B cell (primary cell): ENCODE measurements at regions of chr9 and their contacts with region 1.

Region 1: GRCh38 chr9:133478851-133479711 is at the start of gene SLC2A6:
- DNase-seq: peak; percentile 87
- ATAC-seq: peak; percentile 92
- H3K4me3 ChIP-seq: peak within 1 kb of the TSS; percentile 22 to 83 (median 79)
- H3K4me3 Mint-ChIP-seq: peak within 1 kb of the TSS; percentile 89
- H3K27ac ChIP-seq: peak within 1 kb of the TSS; percentile 71 to 78
- H3K27ac Mint-ChIP-seq: peak within 1 kb of the TSS; percentile 90
- H3K4me1 ChIP-seq: peaks cover 28 to 53% of the 10 kb centered on the region in 2 donors
- H3K4me1 Mint-ChIP-seq: peaks cover 31% of the 10 kb centered on the region
- H3K27me3 ChIP-seq: no peaks in the 10 kb centered on the region
- H3K27me3 Mint-ChIP-seq: peaks cover 3% of the 10 kb centered on the region
- CTCF ChIP-seq: no peak
- total RNA-seq, gene SLC2A6: 47.0 and 51.8 TPM in 2 replicates

Region 2: GRCh38 chr9:133115448-133116345 is 363.4 kb before region 1 on chr9:
- CTCF ChIA-PET with region 1: no interaction called
- POLR2A ChIA-PET with region 1: no interaction called
- intact Hi-C with region 1: loop called (anchors 10 kb)
- DNase-seq: peak; percentile 66
- ATAC-seq: peak; percentile 56
- H3K4me3 ChIP-seq: no peak overlapping the region
- H3K4me3 Mint-ChIP-seq: peak overlapping the region; percentile 67
- H3K27ac ChIP-seq: peak overlapping the region in 1 of 2 donors; percentile 57
- H3K27ac Mint-ChIP-seq: peak overlapping the region; percentile 85
- H3K4me1 ChIP-seq: peaks cover 55 to 68% of the 10 kb centered on the region in 2 donors
- H3K4me1 Mint-ChIP-seq: peaks cover 68% of the 10 kb centered on the region
- H3K27me3 ChIP-seq: no peaks in the 10 kb centered on the region
- H3K27me3 Mint-ChIP-seq: no peaks in the 10 kb centered on the region
- CTCF ChIP-seq: no peak

Region 3: DNA sequence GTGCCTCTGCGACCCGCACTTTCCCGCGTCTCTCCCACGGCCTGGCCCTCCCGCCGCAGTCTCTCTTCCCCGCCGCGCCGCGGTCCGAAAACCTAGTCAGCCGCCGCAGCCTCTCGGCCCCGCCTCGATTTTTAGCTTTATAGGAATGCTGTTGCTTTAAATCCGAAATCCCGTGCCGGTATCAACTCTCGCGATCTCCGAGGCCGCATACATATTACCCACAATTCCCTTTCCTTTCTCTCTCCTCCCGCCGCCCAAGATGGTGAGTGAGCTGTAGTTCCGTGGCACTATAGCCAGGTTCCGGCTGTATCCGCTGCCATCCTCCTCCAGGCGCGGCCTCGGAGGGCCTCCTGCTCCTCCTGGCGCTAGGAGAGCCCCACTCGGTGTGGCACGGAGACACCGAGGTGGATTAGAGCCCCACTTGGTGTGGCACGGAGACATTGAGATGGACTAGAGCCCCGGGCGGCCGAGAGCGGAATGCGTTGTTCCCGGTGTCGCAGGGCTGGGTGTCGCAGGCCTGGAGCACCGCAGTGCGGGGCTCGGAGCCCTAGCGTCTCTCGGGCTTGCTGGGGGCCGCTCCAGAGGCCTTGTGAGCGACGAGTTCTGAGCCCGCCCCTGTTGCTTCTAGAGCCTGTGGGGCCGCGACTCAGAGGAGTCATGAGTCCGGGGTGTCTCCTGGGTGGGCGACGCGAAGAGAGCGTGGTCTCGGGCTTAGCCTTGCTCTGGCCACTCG is 130.9 kb before region 1 on chr9 and contains the starts of genes MED22 and RPL7A:
- CTCF ChIA-PET with region 1: interaction called, 3 read pairs
- POLR2A ChIA-PET with region 1: no interaction called
- intact Hi-C with region 1: loop called (anchors 5 kb)
- DNase-seq: peak; percentile 97
- ATAC-seq: peak; percentile 83
- H3K4me3 ChIP-seq: peak within 1 kb of the TSS; percentile 86 to 96 (median 92)
- H3K4me3 Mint-ChIP-seq: peak within 1 kb of the TSS; percentile 97
- H3K27ac ChIP-seq: peak within 1 kb of the TSS; percentile 87 to 90
- H3K27ac Mint-ChIP-seq: peak within 1 kb of the TSS; percentile 95
- H3K4me1 ChIP-seq: peaks cover 21 to 25% of the 10 kb centered on the region in 2 donors
- H3K4me1 Mint-ChIP-seq: peaks cover 36% of the 10 kb centered on the region
- H3K27me3 ChIP-seq: no peaks in the 10 kb centered on the region
- H3K27me3 Mint-ChIP-seq: no peaks in the 10 kb centered on the region
- CTCF ChIP-seq: no peak
- total RNA-seq, gene MED22: 50.4 and 56.9 TPM in 2 replicates
- total RNA-seq, gene RPL7A: 2,342 and 2,407 TPM in 2 replicates

Region 4: DNA sequence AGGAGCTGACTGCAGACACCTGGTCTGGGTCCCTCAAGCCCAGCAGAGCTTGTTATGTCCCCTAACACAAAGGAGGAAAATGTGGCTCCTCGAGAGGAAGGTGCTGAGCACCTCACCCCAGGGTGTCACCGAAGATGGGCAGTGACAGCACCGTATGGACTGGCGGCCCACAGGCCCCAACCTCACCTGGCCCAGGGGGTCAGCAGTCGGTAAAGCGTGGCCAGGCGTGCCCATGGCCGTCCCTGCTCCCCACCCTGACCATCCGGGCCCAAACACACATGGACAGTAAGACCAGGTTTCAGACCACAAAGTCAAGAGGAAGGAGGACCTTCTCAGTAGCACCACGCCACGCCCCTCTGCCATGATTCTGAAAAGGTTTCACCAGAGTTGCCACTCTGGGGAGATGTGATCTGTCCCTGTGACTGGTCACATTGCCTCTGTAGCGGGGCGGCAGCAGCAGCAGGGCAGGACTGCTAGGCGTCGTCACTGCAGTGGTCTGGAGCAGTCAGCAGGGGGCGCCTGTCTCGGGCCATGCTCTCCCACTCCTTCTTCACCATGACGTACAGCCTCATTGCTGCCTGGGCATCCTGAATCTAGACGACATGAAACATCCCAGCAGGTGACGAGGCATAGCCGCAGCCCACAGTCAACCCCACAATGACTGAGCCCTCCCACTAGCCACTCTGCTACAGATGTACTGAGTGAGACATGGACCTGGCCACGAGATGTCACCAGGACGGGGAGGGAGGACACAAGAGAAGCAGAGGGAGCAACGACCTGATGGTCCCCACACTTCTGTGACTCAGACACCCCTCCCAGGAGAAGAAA is 72.4 kb before region 1 on chr9:
- CTCF ChIA-PET with region 1: interaction called, 3 read pairs
- POLR2A ChIA-PET with region 1: no interaction called
- intact Hi-C with region 1: loop called (anchors 2 kb)
- DNase-seq: peak; percentile 86
- ATAC-seq: peak; percentile 93
- H3K4me3 ChIP-seq: no peak overlapping the region
- H3K4me3 Mint-ChIP-seq: no peak overlapping the region
- H3K27ac ChIP-seq: no peak overlapping the region
- H3K27ac Mint-ChIP-seq: peak overlapping the region; percentile 46
- H3K4me1 ChIP-seq: peaks cover 0 to 2% of the 10 kb centered on the region in 2 donors
- H3K4me1 Mint-ChIP-seq: peaks cover 2% of the 10 kb centered on the region
- H3K27me3 ChIP-seq: no peaks in the 10 kb centered on the region
- H3K27me3 Mint-ChIP-seq: no peaks in the 10 kb centered on the region
- CTCF ChIP-seq: peak; percentile 87

Region 5: DNA sequence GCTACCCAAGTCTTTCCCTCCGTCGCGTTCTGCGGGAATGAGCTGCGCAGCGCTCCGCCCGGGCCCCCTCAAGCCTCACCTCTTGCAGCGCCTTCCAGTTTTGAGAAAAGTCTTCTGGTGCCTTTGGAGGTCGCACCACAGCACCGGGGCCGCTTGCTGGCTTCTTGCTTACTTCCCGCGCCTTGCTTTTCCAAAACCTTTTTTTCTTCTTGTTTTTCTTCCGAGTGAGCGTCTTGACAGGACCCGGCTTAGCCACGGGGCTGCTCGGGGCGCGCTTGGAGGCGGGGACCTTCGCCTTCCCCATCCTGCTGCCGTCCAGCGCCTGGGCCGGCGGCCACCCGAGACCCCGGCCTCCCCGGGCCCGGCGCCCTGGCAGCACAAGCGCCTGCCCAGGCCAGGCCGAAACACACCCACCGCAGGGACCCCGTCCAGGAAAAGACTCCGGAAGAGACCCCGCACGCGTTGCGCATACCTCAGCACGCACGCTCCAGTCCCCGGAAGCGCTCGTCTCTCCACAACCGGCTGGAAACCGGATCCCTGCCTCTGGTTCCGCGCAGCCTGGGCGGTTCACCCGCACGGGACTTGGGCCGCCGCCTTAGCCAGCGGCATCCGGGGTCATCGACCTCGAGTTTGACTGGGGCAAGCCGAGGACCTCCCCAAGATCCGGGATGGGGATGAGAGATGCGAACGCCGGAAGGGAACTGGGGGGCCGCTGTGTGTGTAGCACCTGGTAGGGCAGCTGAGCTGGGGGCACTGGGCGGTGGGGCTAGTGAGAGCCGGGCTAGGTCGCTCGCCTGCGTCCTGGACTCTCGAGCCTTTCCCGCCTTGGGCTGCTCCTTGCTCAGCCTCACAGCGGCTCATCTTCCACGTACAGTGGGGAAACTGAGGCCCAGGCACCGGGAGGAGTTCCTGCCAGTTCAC is 61.3 kb before region 1 on chr9 and contains the start of gene REXO4:
- CTCF ChIA-PET with region 1: no interaction called
- POLR2A ChIA-PET with region 1: interaction called, 3 read pairs
- intact Hi-C with region 1: loop called (anchors 1 kb)
- DNase-seq: peak; percentile 92
- ATAC-seq: peak; percentile 78
- H3K4me3 ChIP-seq: peak within 1 kb of the TSS; percentile 74 to 87 (median 81)
- H3K4me3 Mint-ChIP-seq: peak within 1 kb of the TSS; percentile 89
- H3K27ac ChIP-seq: peak within 1 kb of the TSS; percentile 79 to 92
- H3K27ac Mint-ChIP-seq: peak within 1 kb of the TSS; percentile 93
- H3K4me1 ChIP-seq: peaks cover 30 to 63% of the 10 kb centered on the region in 2 donors
- H3K4me1 Mint-ChIP-seq: peaks cover 68% of the 10 kb centered on the region
- H3K27me3 ChIP-seq: no peaks in the 10 kb centered on the region
- H3K27me3 Mint-ChIP-seq: no peaks in the 10 kb centered on the region
- CTCF ChIP-seq: no peak
- total RNA-seq, gene REXO4: 37.1 and 39.9 TPM in 2 replicates